CD14-positive monocyte (primary cell): ENCODE measurements at regions of chr13 and their contacts with region 1.

Region 1: DNA sequence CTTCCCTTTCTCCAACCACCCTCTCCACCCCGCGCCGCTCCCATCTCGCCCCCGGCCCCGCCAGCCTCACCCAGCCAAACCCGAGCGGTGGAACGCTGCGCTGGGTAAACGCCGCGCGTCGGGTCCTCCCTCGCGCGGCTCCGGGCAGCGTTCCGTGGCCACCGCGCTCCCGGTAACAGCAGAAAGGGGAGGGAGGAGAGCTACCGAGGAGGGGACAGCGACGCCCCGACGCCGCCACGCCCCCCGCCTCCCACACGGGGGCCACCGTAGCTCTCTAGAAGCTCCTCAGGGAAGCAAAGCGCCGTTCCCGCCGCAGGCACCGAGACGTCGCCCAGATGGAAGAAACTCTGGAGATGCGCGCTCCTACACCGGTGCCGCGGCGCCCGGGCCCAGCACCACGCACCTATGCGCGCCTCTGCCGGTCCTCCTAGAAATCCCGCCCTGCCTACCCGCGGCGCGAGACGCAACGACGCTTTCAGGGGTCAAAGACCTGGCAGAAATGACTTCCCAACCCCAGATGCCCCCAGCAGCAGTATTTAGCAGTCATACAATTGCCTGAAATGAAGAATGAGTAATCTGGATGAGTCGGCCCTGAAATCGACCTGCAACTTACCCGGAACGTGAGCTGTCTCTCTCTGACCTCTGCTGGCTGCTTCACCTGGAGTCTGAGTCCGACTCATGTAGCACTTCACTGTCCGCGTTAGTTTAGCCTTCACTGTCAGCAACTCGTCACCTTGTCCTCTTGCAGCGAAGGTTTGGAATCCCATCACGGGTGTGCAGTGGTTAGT is at the start of gene RUBCNL:
- DNase-seq: peak; percentile 61 to 80 (median 70)
- H3K4me3 ChIP-seq: peak within 1 kb of the TSS; percentile 45 to 88 (median 65)
- H3K4me3 Mint-ChIP-seq: peak within 1 kb of the TSS; percentile 92 to 96
- H3K27ac ChIP-seq: peak within 1 kb of the TSS; percentile 40 to 71
- H3K27ac Mint-ChIP-seq: peak within 1 kb of the TSS in 6 of 7 donors; percentile 74 to 90 (median 84)
- H3K4me1 ChIP-seq: peaks cover 76 to 83% of the 10 kb centered on the region in 2 donors
- H3K4me1 Mint-ChIP-seq: peaks cover 77% of the 10 kb centered on the region
- H3K27me3 ChIP-seq: peaks cover 0 to 9% of the 10 kb centered on the region in 2 donors
- H3K27me3 Mint-ChIP-seq: peaks cover 8 to 30% (median 24%) of the 10 kb centered on the region in 3 donors
- CTCF ChIP-seq: peak; percentile 18
- polyA plus RNA-seq, gene RUBCNL: 1.5 to 14.5 (median 2.8) TPM

Region 2: GRCh38 chr13:46321494-46322225 is 65.6 kb before region 1 on chr13:
- intact Hi-C with region 1: loop called in 1 of 2 experiments (anchors 5 kb)
- DNase-seq: peak; percentile 74 to 87 (median 86)
- H3K4me3 ChIP-seq: peak overlapping the region in 2 of 3 experiments; percentile 15 to 26
- H3K4me3 Mint-ChIP-seq: peak overlapping the region in 1 of 2 donors; percentile 51
- H3K27ac ChIP-seq: peak overlapping the region in 1 of 2 donors; percentile 77
- H3K27ac Mint-ChIP-seq: peak overlapping the region; percentile 87 to 97 (median 95)
- H3K4me1 ChIP-seq: peaks cover 32 to 45% of the 10 kb centered on the region in 2 donors
- H3K4me1 Mint-ChIP-seq: peaks cover 59% of the 10 kb centered on the region
- H3K27me3 ChIP-seq: no peaks in the 10 kb centered on the region
- H3K27me3 Mint-ChIP-seq: peaks cover 0 to 3% (median 0%) of the 10 kb centered on the region in 3 donors
- CTCF ChIP-seq: peak; percentile 88

Region 3: GRCh38 chr13:46341112-46341711 is 46.0 kb before region 1 on chr13:
- intact Hi-C with region 1: loop called in 1 of 2 experiments (anchors 5 kb)
- DNase-seq: peak; percentile 94 to 99 (median 96)
- H3K4me3 ChIP-seq: peak overlapping the region in 1 of 3 experiments; percentile 12
- H3K4me3 Mint-ChIP-seq: peak overlapping the region in 1 of 2 donors; percentile 62
- H3K27ac ChIP-seq: peak overlapping the region; percentile 91 to 98
- H3K27ac Mint-ChIP-seq: peak overlapping the region; percentile 97 to 100 (median 99)
- H3K4me1 ChIP-seq: peaks cover 49 to 54% of the 10 kb centered on the region in 2 donors
- H3K4me1 Mint-ChIP-seq: peaks cover 56% of the 10 kb centered on the region
- H3K27me3 ChIP-seq: no peaks in the 10 kb centered on the region
- H3K27me3 Mint-ChIP-seq: peaks cover 0 to 5% (median 0%) of the 10 kb centered on the region in 3 donors
- CTCF ChIP-seq: no peak

Region 4: GRCh38 chr13:46354156-46355091 is 32.8 kb before region 1 on chr13:
- intact Hi-C with region 1: loop called in 1 of 2 experiments (anchors 5 kb)
- DNase-seq: peak; percentile 89 to 96 (median 96)
- H3K4me3 ChIP-seq: no peak overlapping the region
- H3K4me3 Mint-ChIP-seq: peak overlapping the region; percentile 13 to 80
- H3K27ac ChIP-seq: peak overlapping the region; percentile 78 to 97
- H3K27ac Mint-ChIP-seq: peak overlapping the region; percentile 98 to 100 (median 99)
- H3K4me1 ChIP-seq: peaks cover 44 to 47% of the 10 kb centered on the region in 2 donors
- H3K4me1 Mint-ChIP-seq: peaks cover 43% of the 10 kb centered on the region
- H3K27me3 ChIP-seq: no peaks in the 10 kb centered on the region
- H3K27me3 Mint-ChIP-seq: no peaks in the 10 kb centered on the region
- CTCF ChIP-seq: no peak